Activated B cell treated with CpG ODN at 0.5 μM for 24 hours (primary cell): ENCODE measurements at regions of chr10 and their contacts with region 1.

Region 1: GRCh38 chr10:124641282-124642087 is 102.7 kb downstream of the FAM53B start:
- DNase-seq: no peak
- ATAC-seq: peak; percentile 81
- H3K4me3 Mint-ChIP-seq: peak overlapping the region; percentile 74
- H3K27ac Mint-ChIP-seq: peak overlapping the region; percentile 94
- H3K4me1 Mint-ChIP-seq: peaks cover 100% of the 10 kb centered on the region
- H3K27me3 Mint-ChIP-seq: no peaks in the 10 kb centered on the region
- CTCF ChIP-seq: no peak

Region 2: GRCh38 chr10:124530215-124530665 is 111.2 kb before region 1 on chr10:
- CTCF ChIA-PET with region 1: interaction called, 8 read pairs
- POLR2A ChIA-PET with region 1: interaction called, 4 read pairs
- intact Hi-C with region 1: loop called (anchors 1 kb)
- DNase-seq: peak; percentile 86
- ATAC-seq: peak; percentile 91
- H3K4me3 Mint-ChIP-seq: no peak overlapping the region
- H3K27ac Mint-ChIP-seq: peak overlapping the region; percentile 71
- H3K4me1 Mint-ChIP-seq: peaks cover 56% of the 10 kb centered on the region
- H3K27me3 Mint-ChIP-seq: no peaks in the 10 kb centered on the region
- CTCF ChIP-seq: no peak

Region 3: GRCh38 chr10:124612611-124613498 is 28.6 kb before region 1 on chr10:
- CTCF ChIA-PET with region 1: no interaction called
- POLR2A ChIA-PET with region 1: interaction called, 3 read pairs
- intact Hi-C with region 1: loop called (anchors 1 kb)
- DNase-seq: no peak
- ATAC-seq: peak; percentile 54
- H3K4me3 Mint-ChIP-seq: peak overlapping the region; percentile 45
- H3K27ac Mint-ChIP-seq: peak overlapping the region; percentile 96
- H3K4me1 Mint-ChIP-seq: peaks cover 83% of the 10 kb centered on the region
- H3K27me3 Mint-ChIP-seq: no peaks in the 10 kb centered on the region
- CTCF ChIP-seq: no peak

Region 4: DNA sequence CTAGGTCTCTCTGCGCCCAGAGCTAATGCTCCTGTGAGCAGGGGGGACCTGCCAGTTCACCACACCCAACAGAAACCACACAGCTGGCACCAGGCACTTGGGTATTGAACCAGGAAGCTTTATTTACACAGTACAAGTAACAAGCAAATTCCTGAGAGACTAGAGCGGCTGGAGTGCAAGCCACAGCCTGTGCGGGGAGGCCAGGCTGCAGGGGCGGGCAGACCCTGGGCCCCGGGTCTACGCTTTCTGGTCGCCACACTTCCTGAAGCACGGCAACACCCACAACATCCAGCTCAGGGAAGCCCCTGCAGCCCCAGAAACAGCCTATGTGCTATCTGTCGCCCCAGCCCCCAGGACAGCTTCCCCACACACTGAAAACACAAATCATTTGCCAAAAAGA is 22.3 kb before region 1 on chr10:
- CTCF ChIA-PET with region 1: interaction called, 3 read pairs
- POLR2A ChIA-PET with region 1: interaction called, 26 read pairs
- intact Hi-C with region 1: loop called (anchors 1 kb)
- DNase-seq: no peak
- ATAC-seq: peak; percentile 72
- H3K4me3 Mint-ChIP-seq: peak overlapping the region; percentile 69
- H3K27ac Mint-ChIP-seq: peak overlapping the region; percentile 96
- H3K4me1 Mint-ChIP-seq: peaks cover 99% of the 10 kb centered on the region
- H3K27me3 Mint-ChIP-seq: no peaks in the 10 kb centered on the region
- CTCF ChIP-seq: no peak

Region 5: GRCh38 chr10:124626759-124627380 is 14.6 kb before region 1 on chr10:
- CTCF ChIA-PET with region 1: interaction called, 8 read pairs
- POLR2A ChIA-PET with region 1: interaction called, 34 read pairs
- intact Hi-C with region 1: loop called (anchors 1 kb)
- DNase-seq: no peak
- ATAC-seq: peak; percentile 63
- H3K4me3 Mint-ChIP-seq: peak overlapping the region; percentile 46
- H3K27ac Mint-ChIP-seq: peak overlapping the region; percentile 95
- H3K4me1 Mint-ChIP-seq: peaks cover 99% of the 10 kb centered on the region
- H3K27me3 Mint-ChIP-seq: no peaks in the 10 kb centered on the region
- CTCF ChIP-seq: no peak

Region 6: DNA sequence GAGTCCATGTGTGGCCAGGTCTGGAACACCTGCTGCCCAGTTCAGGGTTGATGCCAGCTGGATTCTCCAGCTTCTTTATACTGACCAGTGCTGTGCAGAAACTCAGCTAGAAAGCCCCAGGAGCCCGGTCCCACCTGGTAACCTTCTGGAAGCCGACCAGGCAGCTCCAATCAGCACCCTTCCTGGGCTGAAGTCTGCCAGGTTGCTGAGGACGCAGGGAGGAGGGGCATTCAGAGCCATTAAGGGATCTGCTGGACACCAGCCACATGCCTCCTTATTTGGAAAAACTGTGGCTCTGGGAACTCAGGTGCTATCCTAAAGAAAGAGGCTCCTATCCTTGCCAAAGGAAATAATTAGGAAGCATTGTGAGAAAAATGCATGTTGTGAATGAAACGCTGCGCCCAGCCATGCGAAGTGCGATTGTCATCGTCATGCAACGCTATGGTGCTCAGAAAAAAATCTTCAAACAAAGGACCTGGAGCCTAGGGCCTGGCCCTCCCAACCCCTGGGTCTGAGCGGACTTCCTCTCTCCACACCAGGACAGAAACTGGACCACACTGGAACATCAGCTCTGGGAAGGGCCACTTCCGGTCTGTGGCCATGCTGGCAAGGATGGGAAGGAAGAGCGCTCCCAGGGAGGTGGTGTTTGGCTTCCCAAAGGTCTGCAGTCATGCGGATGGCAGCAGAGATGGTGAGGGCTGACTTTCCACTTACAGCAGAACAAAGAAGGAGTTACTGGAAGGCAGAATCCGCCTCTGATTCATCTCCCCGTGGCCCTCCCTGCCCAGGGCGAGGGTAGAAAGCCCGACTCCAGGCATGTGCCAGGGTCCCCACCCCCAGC is 12.5 kb after region 1 on chr10:
- CTCF ChIA-PET with region 1: interaction called, 5 read pairs
- POLR2A ChIA-PET with region 1: interaction called, 6 read pairs
- intact Hi-C with region 1: loop called (anchors 1 kb)
- DNase-seq: no peak
- ATAC-seq: no peak
- H3K4me3 Mint-ChIP-seq: no peak overlapping the region
- H3K27ac Mint-ChIP-seq: peak overlapping the region; percentile 88
- H3K4me1 Mint-ChIP-seq: peaks cover 93% of the 10 kb centered on the region
- H3K27me3 Mint-ChIP-seq: no peaks in the 10 kb centered on the region
- CTCF ChIP-seq: no peak

Region 7: DNA sequence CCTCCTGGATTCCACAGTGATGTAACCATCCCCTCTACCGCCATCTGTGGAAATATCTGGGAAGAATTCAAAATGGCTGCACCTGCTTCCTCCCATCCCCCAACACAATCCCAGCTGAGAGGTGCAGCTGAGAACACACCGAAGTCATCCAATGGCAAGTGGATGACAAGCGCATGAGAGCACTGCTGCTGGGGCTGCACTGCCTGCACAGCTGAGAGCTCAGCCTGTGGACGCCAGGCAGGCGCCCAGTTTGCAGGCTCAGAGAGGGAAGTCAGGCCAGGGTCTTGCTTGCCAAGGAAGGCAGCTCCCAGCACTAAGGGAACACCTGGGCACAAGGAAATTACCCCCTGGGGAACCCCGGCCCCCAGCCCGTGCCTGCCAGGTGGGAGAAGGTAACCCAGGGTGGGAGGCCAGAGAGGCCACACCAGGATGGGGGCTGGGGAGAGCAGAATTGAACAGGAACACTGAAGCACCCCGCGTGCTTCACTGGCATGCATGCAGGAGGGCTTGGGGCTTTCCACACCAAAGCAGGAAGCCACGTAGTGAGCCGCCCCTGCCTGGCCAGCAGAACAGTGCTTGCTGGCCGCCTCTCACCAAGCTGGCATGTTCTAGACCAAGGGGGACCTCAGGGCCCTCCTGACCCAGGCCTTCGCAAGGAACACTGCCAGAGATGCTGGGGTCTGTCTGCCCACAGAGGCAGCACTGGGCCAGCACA is 56.5 kb after region 1 on chr10:
- CTCF ChIA-PET with region 1: interaction called, 3 read pairs
- POLR2A ChIA-PET with region 1: interaction called, 15 read pairs
- intact Hi-C with region 1: loop called (anchors 1 kb)
- DNase-seq: peak; percentile 44
- ATAC-seq: peak; percentile 45
- H3K4me3 Mint-ChIP-seq: peak overlapping the region; percentile 69
- H3K27ac Mint-ChIP-seq: peak overlapping the region; percentile 96
- H3K4me1 Mint-ChIP-seq: peaks cover 100% of the 10 kb centered on the region
- H3K27me3 Mint-ChIP-seq: no peaks in the 10 kb centered on the region
- CTCF ChIP-seq: no peak